Motor neuron (in vitro differentiated cells): ENCODE measurements at regions of chr5 and their contacts with region 1.

Region 1: DNA sequence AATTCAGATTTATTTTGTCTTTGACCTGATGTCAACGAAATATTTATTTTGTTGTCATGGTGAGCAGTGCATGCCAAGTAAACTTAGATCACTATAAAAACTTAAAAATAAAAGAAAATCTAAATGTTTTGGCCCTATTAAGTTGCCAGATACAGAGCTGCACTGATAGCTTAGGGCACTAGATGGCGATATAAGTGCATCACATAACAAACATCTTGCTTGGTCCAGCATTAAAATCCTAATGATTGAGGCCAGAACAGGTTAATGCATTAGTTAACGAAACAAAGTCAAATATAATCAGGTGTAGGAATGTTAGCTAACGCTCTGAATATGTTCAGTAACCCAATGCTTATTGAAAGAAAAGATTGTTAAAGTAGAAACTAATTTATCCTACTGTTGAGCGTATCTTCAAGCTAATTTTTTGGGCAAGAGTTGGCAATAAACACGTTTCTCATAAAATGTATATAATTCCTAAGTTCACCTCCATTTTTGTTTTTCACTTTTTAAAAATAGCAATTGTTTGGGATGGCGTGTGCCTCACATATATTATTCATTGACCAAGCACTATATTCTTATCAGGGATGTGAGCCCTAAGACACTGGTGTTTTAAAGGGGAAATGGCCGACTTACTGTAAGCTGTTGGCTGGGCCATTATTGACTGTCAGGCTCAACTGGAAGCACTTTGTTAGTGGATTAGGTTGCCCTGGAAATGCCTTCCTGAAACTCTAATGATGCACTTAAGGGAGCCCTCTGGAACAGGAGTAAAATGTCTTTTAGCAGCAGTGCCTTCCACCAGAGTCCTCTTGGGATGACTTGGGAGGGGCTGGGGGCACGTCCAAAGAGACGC is 33.3 kb downstream of the KCTD16 start:
- ATAC-seq: peak; percentile 24 to 72 (median 35)
- H3K4me3 ChIP-seq: no peak overlapping the region
- H3K27ac ChIP-seq: no peak overlapping the region
- H3K4me1 ChIP-seq: peaks cover 10 to 27% of the 10 kb centered on the region in 2 donors

Region 2: DNA sequence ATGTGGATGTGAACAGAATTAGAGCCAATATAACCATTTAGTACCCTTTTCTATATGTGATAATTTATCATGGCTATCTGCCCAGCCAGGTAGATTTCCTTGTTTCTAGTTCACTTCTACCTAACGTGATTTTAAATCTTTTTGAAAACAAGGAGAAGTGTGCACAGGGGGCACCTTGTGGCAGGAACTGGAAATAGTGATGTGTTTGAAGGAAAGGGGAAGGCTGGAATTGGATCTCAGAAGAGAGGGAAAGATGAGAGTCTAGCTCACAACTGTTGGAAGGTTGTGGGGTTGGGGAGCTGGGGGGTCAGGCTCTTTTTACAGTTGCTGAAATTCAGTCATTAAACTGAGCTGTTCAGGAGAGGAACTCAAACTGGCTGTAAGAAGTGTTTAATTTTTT is 186.2 kb after region 1 on chr5:
- in situ Hi-C with region 1: loop called in 1 of 9 experiments (anchors 10 kb)
- ATAC-seq: peak in 2 of 8 experiments; percentile 25 to 26
- H3K4me3 ChIP-seq: no peak overlapping the region
- H3K27ac ChIP-seq: no peak overlapping the region
- H3K4me1 ChIP-seq: no peaks in the 10 kb centered on the region

Region 3: GRCh38 chr5:144979516-144980264 is 775.7 kb after region 1 on chr5:
- in situ Hi-C with region 1: loop called in 1 of 9 experiments (anchors 25 kb)
- ATAC-seq: peak in 1 of 8 experiments; percentile 45
- H3K4me3 ChIP-seq: no peak overlapping the region
- H3K27ac ChIP-seq: no peak overlapping the region
- H3K4me1 ChIP-seq: peaks cover 9 to 11% of the 10 kb centered on the region in 2 donors

Region 4: GRCh38 chr5:145237843-145238242 is 1033.9 kb after region 1 on chr5:
- in situ Hi-C with region 1: loop called in 1 of 9 experiments (anchors 25 kb)
- ATAC-seq: peak in 4 of 8 experiments; percentile 73 to 90 (median 86)
- H3K4me3 ChIP-seq: no peak overlapping the region
- H3K27ac ChIP-seq: no peak overlapping the region
- H3K4me1 ChIP-seq: peaks cover 0 to 17% of the 10 kb centered on the region in 2 donors

Region 5: DNA sequence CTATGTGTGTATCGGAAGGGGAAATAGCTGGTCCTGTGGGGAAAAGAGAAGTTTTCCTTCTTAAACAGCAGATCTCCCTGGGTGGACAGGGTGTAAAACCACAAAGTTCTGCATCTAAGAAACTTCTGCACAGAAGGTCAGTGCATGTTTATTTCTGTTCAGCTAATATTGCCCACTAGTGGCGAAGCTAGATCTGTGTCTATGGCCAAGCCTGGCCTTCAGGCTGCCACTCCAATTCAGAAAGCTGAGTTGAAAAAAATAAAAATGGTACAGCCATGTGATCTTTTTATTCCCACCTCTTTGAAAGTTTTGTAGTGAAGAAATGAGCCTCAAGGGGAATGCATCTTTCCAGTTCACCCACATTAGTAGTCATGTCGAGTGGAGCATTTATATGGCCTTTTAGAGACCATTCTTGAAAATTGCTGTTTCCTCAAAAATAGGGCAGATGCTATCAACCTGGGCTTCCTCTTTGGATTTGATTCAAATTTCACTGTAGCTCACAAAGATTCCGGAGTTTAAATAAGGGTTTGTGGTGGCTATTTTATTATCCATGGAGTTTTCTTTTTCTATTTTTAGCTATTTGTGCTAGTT is 1143.1 kb after region 1 on chr5:
- in situ Hi-C with region 1: loop called in 1 of 9 experiments (anchors 25 kb)
- ATAC-seq: peak; percentile 55 to 95 (median 68)
- H3K4me3 ChIP-seq: no peak overlapping the region
- H3K27ac ChIP-seq: no peak overlapping the region
- H3K4me1 ChIP-seq: peaks cover 0 to 9% of the 10 kb centered on the region in 2 donors

Region 6: GRCh38 chr5:145834917-145835847 is 1631.2 kb after region 1 on chr5 and contains the start of gene PRELID2:
- in situ Hi-C with region 1: loop called in 1 of 9 experiments (anchors 25 kb)
- ATAC-seq: peak; percentile 86 to 98 (median 98)
- H3K4me3 ChIP-seq: peak within 1 kb of the TSS; percentile 41 to 58 (median 45)
- H3K27ac ChIP-seq: peak within 1 kb of the TSS in 1 of 2 donors; percentile 12
- H3K4me1 ChIP-seq: peaks cover 9 to 14% of the 10 kb centered on the region in 2 donors
- total RNA-seq, gene PRELID2: 1.2 to 17.1 (median 9.9) TPM

Region 7: GRCh38 chr5:146049014-146049703 is 1845.2 kb after region 1 on chr5:
- in situ Hi-C with region 1: loop called in 3 of 9 experiments (anchors 25 kb)
- ATAC-seq: peak; percentile 50 to 90 (median 76)
- H3K4me3 ChIP-seq: no peak overlapping the region
- H3K27ac ChIP-seq: no peak overlapping the region
- H3K4me1 ChIP-seq: peaks cover 0 to 4% of the 10 kb centered on the region in 2 donors